ENCODE measurements at regions of chr12 and their contacts with region 1.

Region 1: DNA sequence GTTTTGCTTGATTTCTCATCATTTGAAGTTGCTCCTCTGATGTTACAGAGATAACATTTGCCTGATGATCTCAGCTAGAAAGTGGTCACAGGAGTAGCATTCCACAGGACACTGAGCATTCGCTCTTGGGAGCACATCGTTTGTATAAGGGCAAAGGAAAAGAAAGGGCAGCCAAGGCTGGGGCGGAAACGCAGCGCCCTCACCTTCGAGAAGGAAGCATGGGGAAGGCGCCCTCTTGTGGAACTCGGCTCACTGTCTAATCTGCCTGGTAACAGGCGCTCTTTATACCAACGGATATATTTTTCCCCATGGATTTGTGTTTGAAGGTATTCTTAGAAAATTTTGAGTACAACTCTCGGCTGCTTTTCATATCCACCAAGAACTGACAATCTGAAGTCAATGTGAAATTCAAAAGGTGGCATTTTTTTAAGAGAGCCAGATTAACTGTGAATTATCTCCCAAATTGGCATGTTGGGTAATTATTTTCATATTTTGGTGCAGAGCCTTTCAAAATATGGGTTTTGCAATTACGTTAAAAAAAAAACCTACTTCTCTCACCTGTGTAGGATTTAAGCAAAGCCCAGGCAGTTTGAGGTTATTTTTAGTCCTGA is 172.7 kb downstream of the CAND1 start:
- DNase-seq: peak; percentile 95 to 98
- H3K4me3 ChIP-seq: no peak overlapping the region
- H3K27ac ChIP-seq: peak overlapping the region; percentile 58 to 64 (median 62)
- H3K4me1 ChIP-seq: peaks cover 10 to 19% of the 10 kb centered on the region in 2 donors
- H3K27me3 ChIP-seq: no peaks in the 10 kb centered on the region
- CTCF ChIP-seq: peak; percentile 71 to 92 (median 84)
- POLR2A ChIP-seq: no peak

Region 2: DNA sequence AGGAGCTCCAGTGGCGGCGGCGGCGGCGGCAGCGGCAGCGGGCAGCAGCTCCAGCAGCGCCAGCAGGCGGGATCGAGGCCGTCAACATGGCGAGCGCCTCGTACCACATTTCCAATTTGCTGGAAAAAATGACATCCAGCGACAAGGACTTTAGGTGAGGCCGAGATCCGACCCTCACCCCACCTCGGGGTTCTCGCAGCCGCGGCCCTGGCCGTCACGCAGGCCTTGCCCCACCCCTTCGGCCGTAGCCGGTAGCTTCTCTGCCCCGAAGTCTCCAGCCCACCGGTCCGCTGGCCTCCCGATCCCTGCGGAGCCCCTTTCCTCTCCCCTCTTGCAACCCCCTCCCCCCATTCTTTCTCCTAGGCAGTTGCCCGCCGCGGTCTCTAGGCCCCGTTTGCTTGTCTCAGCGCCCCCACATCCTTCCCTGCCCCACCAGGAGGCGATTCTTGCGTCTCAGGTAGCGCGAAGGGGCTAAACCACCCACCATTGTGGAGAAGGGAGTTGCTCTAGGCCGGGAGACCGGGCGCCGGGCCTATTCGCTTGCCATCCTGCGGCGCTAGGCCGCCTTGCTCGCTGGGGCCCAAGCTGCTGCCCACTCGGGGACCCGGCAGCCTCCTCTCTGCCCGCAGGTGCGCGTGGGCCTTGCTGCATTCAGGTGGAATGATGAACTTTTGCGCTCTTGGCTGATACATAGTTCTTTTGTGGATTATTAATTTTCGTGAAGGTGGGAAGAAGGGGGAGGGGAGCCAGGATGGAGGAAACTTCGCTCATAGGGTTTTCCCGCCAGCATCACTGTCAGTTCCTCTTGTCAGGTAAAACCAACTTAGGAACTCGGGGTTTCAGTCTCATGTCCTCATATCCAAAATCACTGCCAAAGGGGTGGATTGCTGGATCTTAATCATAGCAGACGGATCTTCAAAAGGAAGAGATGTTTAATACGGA is 171.9 kb before region 1 on chr12:
- intact Hi-C with region 1: loop called (anchors 10 kb)
- DNase-seq: peak; percentile 53 to 59
- H3K4me3 ChIP-seq: peak overlapping the region; percentile 68 to 84 (median 83)
- H3K27ac ChIP-seq: peak overlapping the region; percentile 97 to 99 (median 98)
- H3K4me1 ChIP-seq: peaks cover 31% of the 10 kb centered on the region in 2 donors
- H3K27me3 ChIP-seq: no peaks in the 10 kb centered on the region
- CTCF ChIP-seq: peak in 1 of 6 experiments; percentile 4
- POLR2A ChIP-seq: peak in 1 of 2 donors; percentile 68

Region 3: DNA sequence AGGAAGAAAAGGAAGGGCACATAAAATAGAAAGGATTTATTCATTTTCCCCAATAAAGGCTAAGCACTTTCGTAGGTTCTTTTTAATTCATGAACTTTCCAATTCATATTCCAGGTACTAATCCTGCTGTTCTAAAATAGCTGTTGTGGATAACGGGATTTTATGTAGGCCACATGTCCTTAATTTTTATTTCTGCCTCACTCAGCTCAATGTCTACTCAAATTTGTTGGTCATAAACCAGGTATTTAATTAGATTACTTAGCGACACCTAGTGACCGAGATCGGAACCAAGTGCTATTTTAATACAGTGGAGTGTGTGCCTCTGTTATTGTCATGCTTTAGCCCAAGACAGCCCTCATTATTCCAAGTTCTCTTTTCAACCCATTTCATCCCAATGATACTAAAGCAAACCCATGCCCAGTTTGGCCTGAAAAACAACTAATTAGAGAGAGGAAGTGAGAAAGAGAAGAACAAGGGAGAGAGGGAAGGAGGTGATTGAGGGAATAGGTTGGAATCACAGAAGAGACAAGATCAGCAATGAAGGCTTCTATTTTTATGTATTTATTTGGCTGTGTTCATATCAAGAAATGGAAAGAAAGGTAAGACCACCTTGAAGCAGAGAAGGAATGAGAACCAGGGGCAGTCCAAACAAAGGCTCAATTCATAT is 501.5 kb after region 1 on chr12:
- intact Hi-C with region 1: loop called (anchors 5 kb)
- DNase-seq: peak; percentile 69 to 70
- H3K4me3 ChIP-seq: no peak overlapping the region
- H3K27ac ChIP-seq: no peak overlapping the region
- H3K4me1 ChIP-seq: no peaks in the 10 kb centered on the region
- H3K27me3 ChIP-seq: no peaks in the 10 kb centered on the region
- CTCF ChIP-seq: peak; percentile 39 to 87 (median 71)
- POLR2A ChIP-seq: no peak